ENCODE measurements at regions of chr13 and their contacts with region 1.

Region 1: GRCh38 chr13:75372517-75372916 is 109.5 kb downstream of the TBC1D4 start:
- DNase-seq: no peak
- H3K4me3 ChIP-seq: no peak overlapping the region
- H3K27ac ChIP-seq: no peak overlapping the region
- H3K27me3 ChIP-seq: no peaks in the 10 kb centered on the region
- CTCF ChIP-seq: peak; percentile 74

Region 2: DNA sequence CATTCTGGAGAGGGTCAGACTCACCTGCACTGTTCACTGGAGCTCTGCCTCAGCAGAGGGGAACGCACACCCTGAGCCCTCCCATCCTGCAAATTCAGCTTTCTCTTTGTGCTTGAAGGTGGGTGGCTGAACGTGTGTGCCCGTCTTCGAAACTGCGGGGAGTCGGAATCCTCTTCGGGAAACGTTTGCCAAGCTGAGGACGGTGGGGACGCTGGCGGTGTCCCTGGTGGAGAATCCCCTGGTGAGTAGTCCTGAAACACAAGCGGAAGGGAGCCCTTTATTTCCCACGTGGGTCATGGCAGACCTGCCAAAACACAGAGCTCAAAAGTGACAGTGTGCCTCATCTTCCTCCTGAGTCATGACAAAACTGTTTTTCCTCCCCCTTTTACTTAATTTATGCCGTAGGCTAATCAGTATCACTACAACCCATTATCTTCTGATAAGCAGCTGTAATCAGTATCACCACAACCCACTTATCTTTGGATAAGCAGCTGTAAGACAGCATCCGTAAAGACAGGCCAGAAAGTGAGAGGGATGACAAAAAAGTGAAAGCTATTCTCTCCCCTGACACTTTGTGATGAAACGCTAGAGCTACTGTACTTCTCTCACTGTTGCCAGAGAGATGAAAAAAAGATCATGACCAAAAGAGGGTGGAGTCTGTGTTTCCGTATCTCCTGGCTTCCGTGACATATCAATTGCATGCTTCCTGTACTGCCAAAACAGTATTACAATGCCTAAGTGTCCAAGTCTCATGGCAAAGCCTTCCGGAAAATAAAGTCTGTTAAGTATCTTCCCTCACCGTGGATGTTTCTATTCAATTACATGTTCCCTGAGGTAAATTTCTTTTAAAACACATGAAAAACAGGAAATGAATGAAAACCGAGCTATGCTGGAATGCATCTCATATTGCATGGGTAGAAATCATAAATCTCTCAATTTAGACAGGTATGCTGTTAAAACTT is 46.1 kb before region 1 on chr13:
- CTCF ChIA-PET with region 1: interaction called, 11 read pairs
- POLR2A ChIA-PET with region 1: no interaction called
- DNase-seq: no peak
- H3K4me3 ChIP-seq: no peak overlapping the region
- H3K27ac ChIP-seq: no peak overlapping the region
- H3K27me3 ChIP-seq: no peaks in the 10 kb centered on the region
- CTCF ChIP-seq: no peak

Region 3: GRCh38 chr13:75357576-75358289 is 14.8 kb before region 1 on chr13:
- CTCF ChIA-PET with region 1: interaction called, 12 read pairs
- POLR2A ChIA-PET with region 1: no interaction called
- DNase-seq: no peak
- H3K4me3 ChIP-seq: no peak overlapping the region
- H3K27ac ChIP-seq: no peak overlapping the region
- H3K27me3 ChIP-seq: no peaks in the 10 kb centered on the region
- CTCF ChIP-seq: peak; percentile 66

Region 4: DNA sequence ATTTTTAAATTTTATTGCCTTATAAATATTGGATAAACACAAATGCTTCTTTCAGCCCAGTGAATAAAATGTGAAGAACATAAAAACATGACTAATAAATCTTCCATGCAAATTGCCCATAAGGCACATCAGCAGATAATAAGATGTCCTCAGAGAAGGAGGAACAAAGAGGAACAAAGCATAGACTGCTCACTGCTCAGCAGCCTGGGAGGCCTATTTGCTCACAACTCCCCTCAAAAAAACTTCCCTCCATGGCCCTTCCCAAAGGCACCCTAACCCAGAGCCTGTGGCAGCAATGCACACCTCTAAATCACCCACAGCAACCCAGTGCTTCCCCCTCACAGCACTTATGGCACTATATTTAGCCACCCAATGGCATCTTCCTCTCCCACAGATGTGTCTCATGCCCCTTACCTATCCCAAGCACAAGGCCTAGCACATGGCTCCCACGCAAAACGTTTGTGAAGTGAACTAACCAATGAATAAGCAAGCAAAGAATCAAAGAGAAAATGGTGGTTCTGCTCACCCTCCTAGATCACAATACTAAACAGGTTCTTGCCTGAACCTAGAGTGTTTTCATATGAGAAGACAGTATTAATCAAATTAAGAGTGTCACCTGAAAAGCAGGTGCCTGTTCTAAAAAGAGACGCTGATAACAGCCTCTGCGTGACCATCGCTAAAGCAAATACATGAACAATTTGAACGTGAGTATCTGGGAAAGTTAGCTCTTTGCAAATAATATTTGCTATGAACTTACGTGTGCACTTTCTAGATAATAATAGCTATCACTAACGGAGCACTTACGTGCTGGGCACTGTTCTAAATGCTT is 12.6 kb after region 1 on chr13:
- CTCF ChIA-PET with region 1: interaction called, 20 read pairs
- POLR2A ChIA-PET with region 1: no interaction called
- DNase-seq: no peak
- H3K4me3 ChIP-seq: no peak overlapping the region
- H3K27ac ChIP-seq: no peak overlapping the region
- H3K27me3 ChIP-seq: no peaks in the 10 kb centered on the region
- CTCF ChIP-seq: no peak

Region 5: GRCh38 chr13:75402787-75403186 is 30.3 kb after region 1 on chr13:
- CTCF ChIA-PET with region 1: interaction called, 20 read pairs
- POLR2A ChIA-PET with region 1: no interaction called
- DNase-seq: no peak
- H3K4me3 ChIP-seq: no peak overlapping the region
- H3K27ac ChIP-seq: no peak overlapping the region
- H3K27me3 ChIP-seq: no peaks in the 10 kb centered on the region
- CTCF ChIP-seq: no peak

Region 6: DNA sequence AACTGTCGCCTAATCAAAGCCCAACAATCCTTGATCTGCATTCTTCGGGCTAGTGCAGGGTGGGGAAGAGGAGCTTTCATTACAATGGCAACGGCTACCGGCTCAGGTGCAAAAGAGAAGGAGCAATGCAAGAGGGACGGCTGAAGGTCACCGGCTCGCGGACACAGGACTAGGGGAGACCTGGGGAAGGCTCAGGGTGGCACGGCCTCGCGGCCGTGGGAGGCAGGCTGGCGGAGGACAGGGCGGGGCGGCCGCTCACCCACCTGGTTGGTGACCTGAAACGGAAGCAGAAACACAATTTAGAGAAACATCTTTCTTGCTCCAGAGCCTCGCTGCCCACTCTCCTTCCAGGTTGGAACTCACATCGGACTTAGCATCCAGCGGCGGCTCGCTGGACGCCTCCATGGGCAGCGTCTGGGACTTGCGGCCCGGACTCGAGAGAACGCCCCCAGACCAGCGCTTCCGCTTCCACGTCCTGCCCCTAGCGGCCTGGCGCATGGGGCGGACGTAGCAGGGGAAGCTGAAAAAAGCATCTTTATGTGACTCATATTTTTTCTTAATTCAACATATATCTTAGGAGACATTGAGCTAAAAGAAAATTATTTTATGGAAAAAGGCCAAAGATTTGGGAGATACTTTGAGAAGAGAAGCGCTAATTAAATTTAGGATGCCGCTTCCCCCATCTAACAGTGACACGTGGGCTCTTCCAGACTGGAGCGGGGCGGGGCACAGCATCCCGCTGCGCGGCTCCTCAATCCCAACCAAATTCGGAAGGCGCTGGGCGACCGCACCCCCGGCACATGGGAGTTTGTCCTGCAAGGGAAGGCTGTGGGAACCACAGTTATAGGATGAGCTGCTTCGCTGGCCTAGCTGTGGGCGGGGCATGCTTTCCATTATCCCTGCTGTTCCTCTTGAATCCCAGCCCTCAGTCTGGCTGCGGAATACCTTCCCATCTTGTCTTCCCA is 165.2 kb after region 1 on chr13 and contains the start of gene COMMD6:
- CTCF ChIA-PET with region 1: interaction called, 13 read pairs
- POLR2A ChIA-PET with region 1: interaction called, 3 read pairs
- DNase-seq: peak; percentile 96
- H3K4me3 ChIP-seq: peak within 1 kb of the TSS; percentile 81
- H3K27ac ChIP-seq: peak within 1 kb of the TSS; percentile 69
- H3K27me3 ChIP-seq: no peaks in the 10 kb centered on the region
- CTCF ChIP-seq: peak; percentile 58
- polyA plus RNA-seq, gene COMMD6: 236 and 351 TPM in 2 replicates

Region 7: GRCh38 chr13:75788481-75788981 is 416.0 kb after region 1 on chr13:
- CTCF ChIA-PET with region 1: no interaction called
- POLR2A ChIA-PET with region 1: no interaction called
- DNase-seq: peak; percentile 85
- H3K4me3 ChIP-seq: no peak overlapping the region
- H3K27ac ChIP-seq: peak overlapping the region; percentile 76
- H3K27me3 ChIP-seq: no peaks in the 10 kb centered on the region
- CTCF ChIP-seq: no peak

Measured in AG04450 (cell line).